ENCODE measurements at regions of chr11 and their contacts with region 1.

Region 1: GRCh38 chr11:96424693-96425092 is 34.9 kb downstream of the JRKL start:
- DNase-seq: no peak
- H3K4me3 Mint-ChIP-seq: no peak overlapping the region
- H3K27ac Mint-ChIP-seq: no peak overlapping the region
- H3K4me1 Mint-ChIP-seq: peaks cover 4% of the 10 kb centered on the region
- H3K27me3 Mint-ChIP-seq: peaks cover 17% of the 10 kb centered on the region

Region 2: GRCh38 chr11:95715777-95716241 is 708.9 kb before region 1 on chr11:
- CTCF ChIA-PET with region 1: no interaction called
- intact Hi-C with region 1: loop called (anchors 2 kb)
- DNase-seq: peak; percentile 64
- H3K4me3 Mint-ChIP-seq: no peak overlapping the region
- H3K27ac Mint-ChIP-seq: no peak overlapping the region
- H3K4me1 Mint-ChIP-seq: peaks cover 54% of the 10 kb centered on the region
- H3K27me3 Mint-ChIP-seq: no peaks in the 10 kb centered on the region

Region 3: DNA sequence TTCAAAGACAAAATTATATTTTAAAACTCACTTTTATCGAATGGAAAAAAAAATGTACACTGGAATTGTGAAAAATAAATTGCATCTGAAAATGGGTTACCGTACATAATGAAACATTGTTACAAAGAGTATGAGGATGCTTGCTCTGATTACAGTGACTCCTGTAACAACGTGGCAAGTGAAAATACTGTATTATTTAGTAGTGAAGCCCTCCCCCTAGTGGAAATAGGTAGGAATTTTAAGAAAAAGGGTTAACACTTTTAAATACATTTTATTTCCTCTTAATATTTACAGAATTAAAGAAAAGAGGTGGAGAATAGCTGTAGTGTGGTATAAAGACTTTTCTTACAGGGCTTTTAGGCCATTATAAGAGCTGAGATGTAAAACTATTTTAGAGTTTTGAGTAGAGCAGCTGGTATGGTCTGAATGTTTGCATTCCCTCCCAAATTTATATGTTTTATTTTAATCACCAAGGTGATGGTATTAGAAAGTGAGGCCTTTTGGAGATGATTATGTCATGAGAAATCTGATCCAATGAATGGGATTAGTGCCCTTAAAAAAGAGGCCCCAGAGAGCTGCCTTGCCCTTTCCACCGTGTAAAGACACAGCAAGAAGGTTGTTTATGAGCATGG is 660.3 kb before region 1 on chr11:
- CTCF ChIA-PET with region 1: interaction called, 3 read pairs
- intact Hi-C with region 1: loop called (anchors 2 kb)
- DNase-seq: no peak
- H3K4me3 Mint-ChIP-seq: no peak overlapping the region
- H3K27ac Mint-ChIP-seq: no peak overlapping the region
- H3K4me1 Mint-ChIP-seq: no peaks in the 10 kb centered on the region
- H3K27me3 Mint-ChIP-seq: peaks cover 1% of the 10 kb centered on the region

Region 4: GRCh38 chr11:95849087-95849825 is 575.4 kb before region 1 on chr11:
- CTCF ChIA-PET with region 1: interaction called, 17 read pairs
- intact Hi-C with region 1: loop called (anchors 1 kb)
- DNase-seq: peak; percentile 65
- H3K4me3 Mint-ChIP-seq: no peak overlapping the region
- H3K27ac Mint-ChIP-seq: no peak overlapping the region
- H3K4me1 Mint-ChIP-seq: no peaks in the 10 kb centered on the region
- H3K27me3 Mint-ChIP-seq: no peaks in the 10 kb centered on the region

Region 5: DNA sequence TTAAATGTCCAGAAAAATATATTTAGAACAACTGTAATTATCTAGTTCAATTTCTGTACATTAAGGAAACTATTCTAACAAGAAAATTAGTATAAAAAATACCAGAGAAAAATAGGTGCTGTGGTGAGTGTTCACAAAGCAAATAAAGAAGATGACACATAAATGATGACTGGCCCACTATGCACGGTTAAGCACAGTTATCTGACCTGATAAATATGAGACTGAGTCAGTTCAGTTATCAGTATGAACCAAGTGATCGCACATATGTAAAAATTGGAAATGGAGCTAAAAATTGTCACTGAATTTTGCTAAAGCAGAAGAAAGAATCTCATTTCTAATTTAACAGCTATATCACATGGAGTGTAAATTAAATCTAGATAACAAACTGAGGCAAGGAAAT is 62.9 kb before region 1 on chr11:
- CTCF ChIA-PET with region 1: no interaction called
- intact Hi-C with region 1: no loop called
- DNase-seq: no peak
- H3K4me3 Mint-ChIP-seq: no peak overlapping the region
- H3K27ac Mint-ChIP-seq: no peak overlapping the region
- H3K4me1 Mint-ChIP-seq: peaks cover 14% of the 10 kb centered on the region
- H3K27me3 Mint-ChIP-seq: no peaks in the 10 kb centered on the region